Activated CD8-positive, alpha-beta T cell treated with anti-CD3 and anti-CD28 coated beads, Interleukin-2, amount 10 ng/mL, durations not matched to agents 7 days and 5 days (primary cell): ENCODE measurements at regions of chr17 and their contacts with region 1.

Region 1: GRCh38 chr17:64320613-64321553 is 57.8 kb upstream of the TEX2 start:
- DNase-seq: peak; percentile 70
- ATAC-seq: peak; percentile 60
- H3K4me3 Mint-ChIP-seq: no peak overlapping the region
- H3K27ac Mint-ChIP-seq: no peak overlapping the region
- H3K4me1 Mint-ChIP-seq: peaks cover 10% of the 10 kb centered on the region
- H3K27me3 Mint-ChIP-seq: peaks cover 4% of the 10 kb centered on the region

Region 2: GRCh38 chr17:64306850-64307463 is 13.9 kb before region 1 on chr17:
- CTCF ChIA-PET with region 1: interaction called, 14 read pairs
- POLR2A ChIA-PET with region 1: no interaction called
- DNase-seq: peak; percentile 81
- ATAC-seq: peak; percentile 87
- H3K4me3 Mint-ChIP-seq: no peak overlapping the region
- H3K27ac Mint-ChIP-seq: no peak overlapping the region
- H3K4me1 Mint-ChIP-seq: no peaks in the 10 kb centered on the region
- H3K27me3 Mint-ChIP-seq: no peaks in the 10 kb centered on the region

Region 3: GRCh38 chr17:64348666-64349065 is 27.8 kb after region 1 on chr17:
- CTCF ChIA-PET with region 1: interaction called, 10 read pairs
- POLR2A ChIA-PET with region 1: no interaction called
- DNase-seq: no peak
- ATAC-seq: no peak
- H3K4me3 Mint-ChIP-seq: no peak overlapping the region
- H3K27ac Mint-ChIP-seq: peak overlapping the region; percentile 92
- H3K4me1 Mint-ChIP-seq: peaks cover 28% of the 10 kb centered on the region
- H3K27me3 Mint-ChIP-seq: no peaks in the 10 kb centered on the region

Region 4: GRCh38 chr17:64399071-64399766 is 78.3 kb after region 1 on chr17:
- CTCF ChIA-PET with region 1: interaction called, 10 read pairs
- POLR2A ChIA-PET with region 1: no interaction called
- DNase-seq: peak; percentile 51
- ATAC-seq: peak; percentile 13
- H3K4me3 Mint-ChIP-seq: peak overlapping the region; percentile 54
- H3K27ac Mint-ChIP-seq: peak overlapping the region; percentile 78
- H3K4me1 Mint-ChIP-seq: peaks cover 67% of the 10 kb centered on the region
- H3K27me3 Mint-ChIP-seq: no peaks in the 10 kb centered on the region

Region 5: GRCh38 chr17:64411999-64412771 is 91.3 kb after region 1 on chr17:
- CTCF ChIA-PET with region 1: interaction called, 131 read pairs
- POLR2A ChIA-PET with region 1: no interaction called
- DNase-seq: no peak
- ATAC-seq: peak; percentile 11
- H3K4me3 Mint-ChIP-seq: peak overlapping the region; percentile 29
- H3K27ac Mint-ChIP-seq: no peak overlapping the region
- H3K4me1 Mint-ChIP-seq: peaks cover 31% of the 10 kb centered on the region
- H3K27me3 Mint-ChIP-seq: no peaks in the 10 kb centered on the region